Endothelial cell of umbilical vein (primary cell): ENCODE measurements at regions of chr4 and their contacts with region 1.

Region 1: GRCh38 chr4:84952009-84952408 is 14.5 kb downstream of the WDFY3 start:
- DNase-seq: peak; percentile 21
- H3K4me3 ChIP-seq: no peak overlapping the region
- H3K27ac ChIP-seq: no peak overlapping the region
- H3K4me1 ChIP-seq: peaks cover 11% of the 10 kb centered on the region
- H3K27me3 ChIP-seq: no peaks in the 10 kb centered on the region
- CTCF ChIP-seq: no peak
- POLR2A ChIP-seq: no peak

Region 2: DNA sequence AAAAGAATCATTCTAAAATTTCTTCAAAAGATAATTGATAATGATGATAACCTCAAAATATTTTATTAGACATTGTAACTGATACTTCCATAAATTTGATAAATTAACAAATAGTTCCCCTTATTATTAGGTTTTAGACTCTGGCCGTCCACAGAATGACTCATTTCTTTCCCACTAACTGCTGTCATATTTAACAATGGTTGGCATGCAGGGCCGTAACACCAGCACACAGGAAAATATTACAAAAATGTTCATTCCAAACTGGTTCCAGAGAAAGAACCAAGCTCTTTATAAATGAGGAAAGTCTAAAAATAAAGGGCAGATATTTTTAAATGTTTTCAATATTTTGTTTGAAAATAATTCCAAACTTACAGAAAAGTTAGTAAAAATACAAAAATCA is 13.7 kb before region 1 on chr4:
- CTCF ChIA-PET with region 1: interaction called, 5 read pairs
- POLR2A ChIA-PET with region 1: no interaction called
- dilution Hi-C with region 1: no loop called
- intact Hi-C with region 1: loop called (anchors 2 kb)
- DNase-seq: peak; percentile 85
- H3K4me3 ChIP-seq: peak overlapping the region in 1 of 3 experiments; percentile 37
- H3K27ac ChIP-seq: peak overlapping the region; percentile 53
- H3K4me1 ChIP-seq: peaks cover 28% of the 10 kb centered on the region
- H3K27me3 ChIP-seq: no peaks in the 10 kb centered on the region
- CTCF ChIP-seq: no peak
- POLR2A ChIP-seq: no peak

Region 3: DNA sequence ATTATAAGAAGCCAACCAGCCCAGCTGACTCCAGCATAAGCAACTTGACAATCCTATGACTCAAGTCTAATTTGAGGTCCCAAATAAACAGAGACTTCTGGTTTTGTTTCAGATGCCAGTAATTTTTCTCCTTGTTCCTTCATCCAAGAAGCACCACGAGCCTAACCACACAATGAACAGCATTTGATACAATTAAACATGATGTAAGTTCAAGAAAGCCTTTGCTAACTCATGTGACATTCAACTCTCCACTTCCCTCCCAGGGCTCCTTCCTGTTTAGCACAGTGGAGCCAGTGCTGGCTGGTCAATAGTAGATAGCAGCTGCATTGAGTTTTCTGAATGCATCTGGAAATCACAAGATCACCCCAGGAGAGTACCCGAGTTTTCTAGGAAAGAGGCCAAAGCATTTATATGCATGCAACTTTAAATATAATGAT is 729.2 kb after region 1 on chr4:
- CTCF ChIA-PET with region 1: no interaction called
- POLR2A ChIA-PET with region 1: no interaction called
- dilution Hi-C with region 1: no loop called
- intact Hi-C with region 1: no loop called
- DNase-seq: no peak
- H3K4me3 ChIP-seq: no peak overlapping the region
- H3K27ac ChIP-seq: no peak overlapping the region
- H3K4me1 ChIP-seq: no peaks in the 10 kb centered on the region
- H3K27me3 ChIP-seq: peaks cover 8 to 41% of the 10 kb centered on the region in 2 experiments
- CTCF ChIP-seq: no peak
- POLR2A ChIP-seq: no peak